Posterior vena cava (tissue), 2 donors: ENCODE measurements at regions of chr2 and their contacts with region 1.

Region 1: GRCh38 chr2:24008672-24009366 is 1.1 kb upstream of the MFSD2B start:
- DNase-seq: no peak

Region 2: GRCh38 chr2:22110244-22110651 is 1898.6 kb before region 1 on chr2:
- intact Hi-C with region 1: no loop called
- DNase-seq: no peak

Region 3: DNA sequence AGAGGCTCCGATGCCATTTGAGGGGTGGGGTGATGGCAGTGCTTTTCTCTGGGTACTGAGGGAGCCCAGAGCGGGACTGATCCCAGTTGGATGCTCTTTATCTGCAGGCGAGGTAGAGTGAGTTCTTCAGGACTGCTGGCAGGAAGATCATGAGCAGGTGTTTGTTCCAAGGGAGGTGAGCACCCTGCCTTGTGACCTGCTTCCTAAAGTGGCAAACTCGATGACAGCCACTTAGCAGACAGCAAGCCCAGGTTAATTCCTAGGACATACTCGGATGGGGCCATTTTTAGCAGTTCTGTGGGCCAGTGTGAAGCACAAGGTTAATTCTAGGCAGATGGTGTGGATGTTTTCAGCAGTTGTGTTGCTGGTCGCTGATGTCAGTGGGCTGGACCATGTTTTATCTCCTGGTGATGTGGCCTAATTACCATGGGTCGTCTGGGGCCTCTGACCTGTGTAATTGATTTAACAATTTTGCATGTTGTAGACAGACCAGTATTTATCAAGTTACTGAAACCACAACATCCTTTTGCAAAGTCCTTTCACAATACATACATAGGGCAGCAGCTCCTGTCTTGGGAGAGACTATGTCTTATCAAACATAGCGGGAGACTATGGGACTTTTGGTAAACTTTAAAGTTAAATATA is 45.7 kb after region 1 on chr2:
- intact Hi-C with region 1: loop called in 1 of 2 experiments (anchors 1 kb)
- DNase-seq: no peak